CD8-positive, alpha-beta T cell (primary cell): ENCODE measurements at regions of chr21 and their contacts with region 1.

Region 1: DNA sequence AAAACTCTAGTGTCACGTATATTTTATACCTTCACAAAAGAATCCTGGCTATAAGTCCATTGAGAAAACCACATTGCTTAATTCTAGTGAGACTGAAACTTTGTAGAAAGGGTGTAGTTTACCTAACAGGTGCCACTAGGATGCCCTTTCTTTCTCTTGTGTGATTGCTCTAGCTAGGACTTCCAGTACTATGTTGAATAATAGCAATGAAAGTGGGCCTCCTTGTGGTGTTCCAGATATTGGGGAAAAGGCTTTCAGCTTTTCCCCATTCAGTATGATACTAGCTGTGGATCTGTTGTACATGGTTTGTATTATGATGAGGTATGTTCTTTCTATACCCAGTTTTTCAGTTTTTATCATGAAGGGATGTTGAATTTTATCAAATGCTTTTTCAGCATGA is 39.7 kb upstream of the CHODL start:
- DNase-seq: peak in 2 of 9 experiments; percentile 4 to 7
- ATAC-seq: no peak
- H3K4me3 ChIP-seq: no peak overlapping the region
- H3K4me3 Mint-ChIP-seq: no peak overlapping the region
- H3K27ac ChIP-seq: no peak overlapping the region
- H3K27ac Mint-ChIP-seq: no peak overlapping the region
- H3K4me1 ChIP-seq: no peaks in the 10 kb centered on the region
- H3K4me1 Mint-ChIP-seq: no peaks in the 10 kb centered on the region
- H3K27me3 ChIP-seq: no peaks in the 10 kb centered on the region
- H3K27me3 Mint-ChIP-seq: no peaks in the 10 kb centered on the region
- CTCF ChIP-seq: no peak

Region 2: GRCh38 chr21:16900685-16901084 is 1304.2 kb before region 1 on chr21:
- CTCF ChIA-PET with region 1: no interaction called
- POLR2A ChIA-PET with region 1: no interaction called
- intact Hi-C with region 1: no loop called
- DNase-seq: no peak
- ATAC-seq: no peak
- H3K4me3 ChIP-seq: no peak overlapping the region
- H3K4me3 Mint-ChIP-seq: no peak overlapping the region
- H3K27ac ChIP-seq: no peak overlapping the region
- H3K27ac Mint-ChIP-seq: no peak overlapping the region
- H3K4me1 ChIP-seq: no peaks in the 10 kb centered on the region
- H3K4me1 Mint-ChIP-seq: no peaks in the 10 kb centered on the region
- H3K27me3 ChIP-seq: no peaks in the 10 kb centered on the region
- H3K27me3 Mint-ChIP-seq: no peaks in the 10 kb centered on the region
- CTCF ChIP-seq: no peak

Region 3: DNA sequence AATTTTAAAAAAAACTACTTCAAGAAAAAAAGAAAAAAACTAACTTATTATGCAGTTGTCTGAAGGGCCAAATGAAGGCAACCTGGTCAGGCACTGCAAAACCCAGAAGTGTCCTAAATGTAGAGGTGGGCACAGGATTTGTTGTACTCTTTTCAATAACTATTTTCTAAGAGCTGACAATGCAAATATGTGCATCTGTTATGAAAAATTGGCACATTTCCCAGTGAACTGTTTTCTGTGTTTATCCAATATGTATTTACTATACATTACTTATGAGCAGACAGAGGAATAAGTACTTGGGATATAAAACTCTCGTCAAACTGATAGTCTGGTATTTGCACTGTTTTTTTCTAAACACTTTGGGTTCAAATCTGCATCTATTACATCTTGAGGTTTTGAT is 197.8 kb before region 1 on chr21:
- CTCF ChIA-PET with region 1: no interaction called
- POLR2A ChIA-PET with region 1: no interaction called
- intact Hi-C with region 1: no loop called
- DNase-seq: no peak
- ATAC-seq: no peak
- H3K4me3 ChIP-seq: no peak overlapping the region
- H3K4me3 Mint-ChIP-seq: no peak overlapping the region
- H3K27ac ChIP-seq: no peak overlapping the region
- H3K27ac Mint-ChIP-seq: no peak overlapping the region
- H3K4me1 ChIP-seq: no peaks in the 10 kb centered on the region
- H3K4me1 Mint-ChIP-seq: no peaks in the 10 kb centered on the region
- H3K27me3 ChIP-seq: no peaks in the 10 kb centered on the region
- H3K27me3 Mint-ChIP-seq: no peaks in the 10 kb centered on the region
- CTCF ChIP-seq: no peak

Region 4: GRCh38 chr21:18041012-18041411 is 163.9 kb before region 1 on chr21:
- CTCF ChIA-PET with region 1: no interaction called
- POLR2A ChIA-PET with region 1: no interaction called
- intact Hi-C with region 1: loop called in 1 of 2 experiments (anchors 1 kb)
- DNase-seq: peak in 2 of 9 experiments; percentile 35 to 39
- ATAC-seq: no peak
- H3K4me3 ChIP-seq: no peak overlapping the region
- H3K4me3 Mint-ChIP-seq: no peak overlapping the region
- H3K27ac ChIP-seq: no peak overlapping the region
- H3K27ac Mint-ChIP-seq: no peak overlapping the region
- H3K4me1 ChIP-seq: no peaks in the 10 kb centered on the region
- H3K4me1 Mint-ChIP-seq: no peaks in the 10 kb centered on the region
- H3K27me3 ChIP-seq: no peaks in the 10 kb centered on the region
- H3K27me3 Mint-ChIP-seq: no peaks in the 10 kb centered on the region
- CTCF ChIP-seq: no peak